Mucosa of descending colon (tissue), 3 donors: ENCODE measurements at regions of chr22 and their contacts with region 1.

Region 1: GRCh38 chr22:24845041-24845898 is 39.3 kb downstream of the SGSM1 start:
- DNase-seq: peak in 1 of 3 donors; percentile 14
- ATAC-seq: no peak
- H3K4me3 ChIP-seq: no peak overlapping the region
- H3K4me1 ChIP-seq: peaks cover 4% of the 10 kb centered on the region
- CTCF ChIP-seq: no peak

Region 2: GRCh38 chr22:24768537-24769374 is 76.5 kb before region 1 on chr22:
- intact Hi-C with region 1: loop called (anchors 5 kb)
- DNase-seq: peak in 2 of 3 donors; percentile 67 to 92
- ATAC-seq: peak; percentile 90
- H3K4me3 ChIP-seq: no peak overlapping the region
- H3K4me1 ChIP-seq: no peaks in the 10 kb centered on the region
- CTCF ChIP-seq: peak; percentile 60